ENCODE measurements at regions of chr12 and their contacts with region 1.

Region 1: GRCh38 chr12:122886851-122887816 is 8.8 kb downstream of the VPS37B start:
- DNase-seq: no peak
- ATAC-seq: peak in 2 of 3 donors; percentile 9 to 36
- H3K4me3 ChIP-seq: no peak overlapping the region
- H3K4me3 Mint-ChIP-seq: peak overlapping the region; percentile 90
- H3K27ac ChIP-seq: peak overlapping the region; percentile 68
- H3K27ac Mint-ChIP-seq: peak overlapping the region; percentile 87 to 100
- H3K4me1 ChIP-seq: peaks cover 71% of the 10 kb centered on the region
- H3K4me1 Mint-ChIP-seq: peaks cover 87 to 88% of the 10 kb centered on the region in 2 donors
- H3K27me3 ChIP-seq: no peaks in the 10 kb centered on the region
- H3K27me3 Mint-ChIP-seq: no peaks in the 10 kb centered on the region
- CTCF ChIP-seq: no peak

Region 2: DNA sequence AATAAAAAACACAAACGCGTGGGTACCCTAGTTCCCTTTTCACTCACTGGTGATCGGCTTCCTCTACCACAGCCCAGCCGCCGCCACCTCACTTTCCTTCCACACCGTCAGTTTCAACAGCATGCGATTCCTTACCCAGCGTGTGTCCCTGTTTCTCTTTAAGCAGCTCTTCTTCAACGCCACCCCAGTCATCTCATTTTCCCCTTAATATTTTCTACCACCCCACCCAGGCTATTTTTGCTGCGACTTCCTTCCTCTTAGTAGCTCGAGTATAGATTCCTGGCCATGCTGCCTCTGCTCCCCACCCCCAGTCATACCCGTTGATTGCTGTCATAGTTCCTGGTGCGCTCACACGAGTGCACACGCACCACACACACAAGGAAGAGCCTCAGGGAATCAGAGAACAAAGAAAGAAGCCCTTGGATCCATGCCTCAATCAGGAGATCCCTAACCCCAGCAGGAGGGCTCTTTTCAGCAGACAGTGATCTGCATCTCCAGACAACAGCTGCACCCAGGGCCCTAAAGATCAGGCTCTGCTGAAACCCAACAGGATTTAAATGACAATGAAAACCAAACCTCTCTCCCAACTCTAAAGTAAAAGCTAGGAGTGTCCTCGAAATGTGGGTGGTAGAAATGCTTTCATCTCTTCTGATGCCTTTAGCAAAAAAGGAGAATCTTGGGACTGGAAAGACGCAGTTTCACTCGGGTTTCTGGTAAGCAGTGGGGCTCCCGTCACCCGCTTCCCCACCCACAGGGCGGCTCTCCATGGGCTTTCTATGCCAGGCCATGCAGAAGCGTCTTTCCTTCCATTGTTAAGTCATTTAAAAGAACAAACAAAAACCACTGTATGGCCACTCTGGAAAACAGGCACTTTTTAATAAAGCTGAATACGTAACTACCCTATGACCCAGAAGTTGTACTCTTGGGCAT is 15.0 kb before region 1 on chr12:
- intact Hi-C with region 1: loop called (anchors 2 kb)
- DNase-seq: peak in 1 of 2 donors; percentile 54
- ATAC-seq: peak; percentile 55 to 68 (median 56)
- H3K4me3 ChIP-seq: peak overlapping the region; percentile 36
- H3K4me3 Mint-ChIP-seq: peak overlapping the region; percentile 87
- H3K27ac ChIP-seq: peak overlapping the region; percentile 75
- H3K27ac Mint-ChIP-seq: peak overlapping the region; percentile 74 to 89
- H3K4me1 ChIP-seq: peaks cover 80% of the 10 kb centered on the region
- H3K4me1 Mint-ChIP-seq: peaks cover 82% of the 10 kb centered on the region in 2 donors
- H3K27me3 ChIP-seq: no peaks in the 10 kb centered on the region
- H3K27me3 Mint-ChIP-seq: no peaks in the 10 kb centered on the region
- CTCF ChIP-seq: no peak